ENCODE measurements at regions of chr9 and their contacts with region 1.

Region 1: DNA sequence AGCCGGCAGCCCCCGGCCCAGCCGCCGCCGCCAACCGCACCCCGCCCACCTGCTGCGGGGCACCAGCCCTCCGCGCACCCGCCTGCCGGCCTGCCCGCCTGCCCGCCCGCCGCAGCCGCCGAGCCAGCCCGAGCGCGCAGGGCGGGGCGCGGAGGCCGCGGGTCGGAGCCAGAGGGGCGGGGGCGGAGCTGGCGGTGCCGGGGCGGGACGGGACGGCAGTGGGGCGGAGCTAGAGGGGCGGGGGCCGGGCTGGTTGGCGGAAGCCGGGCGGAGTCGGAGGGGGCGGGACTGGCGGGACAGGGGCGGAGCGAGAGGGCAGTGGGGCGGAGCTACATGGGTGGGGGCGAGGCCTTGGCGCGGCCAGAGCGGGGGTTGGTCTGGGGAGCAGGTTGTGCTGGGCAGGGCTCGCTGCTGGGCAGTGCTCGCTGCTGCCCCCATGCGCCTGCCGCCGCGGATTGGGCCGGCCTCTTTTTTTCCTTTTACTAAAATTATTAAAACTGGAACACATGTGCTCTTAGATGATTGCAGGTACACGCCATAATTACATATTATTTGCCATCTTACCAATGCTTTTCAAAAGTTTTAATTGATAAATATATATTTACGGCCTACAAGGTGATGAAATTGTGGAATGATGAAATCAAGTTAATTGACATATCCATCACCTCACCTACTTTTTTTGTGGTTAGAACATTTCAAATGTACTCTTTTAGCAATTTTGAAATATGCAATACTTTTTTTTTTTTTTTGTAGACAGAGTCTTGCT is at the start of gene SH3GLB2:
- DNase-seq: peak; percentile 74 to 94
- H3K4me3 ChIP-seq: peak within 1 kb of the TSS; percentile 80 to 84
- H3K27ac ChIP-seq: peak within 1 kb of the TSS; percentile 82 to 84
- H3K4me1 ChIP-seq: peaks cover 14 to 24% of the 10 kb centered on the region in 2 donors
- H3K27me3 ChIP-seq: no peaks in the 10 kb centered on the region
- CTCF ChIP-seq: peak; percentile 84 to 95 (median 90)
- total RNA-seq, gene SH3GLB2: 138 TPM

Region 2: GRCh38 chr9:128863647-128864046 is 164.7 kb before region 1 on chr9:
- intact Hi-C with region 1: loop called (anchors 5 kb)
- DNase-seq: peak in 1 of 2 donors; percentile 84
- H3K4me3 ChIP-seq: no peak overlapping the region
- H3K27ac ChIP-seq: no peak overlapping the region
- H3K4me1 ChIP-seq: peaks cover 0 to 8% of the 10 kb centered on the region in 2 donors
- H3K27me3 ChIP-seq: no peaks in the 10 kb centered on the region
- CTCF ChIP-seq: peak; percentile 93 to 95 (median 94)

Region 3: GRCh38 chr9:128992995-128993394 is 35.4 kb before region 1 on chr9:
- intact Hi-C with region 1: loop called (anchors 5 kb)
- DNase-seq: no peak
- H3K4me3 ChIP-seq: no peak overlapping the region
- H3K27ac ChIP-seq: no peak overlapping the region
- H3K4me1 ChIP-seq: no peaks in the 10 kb centered on the region
- H3K27me3 ChIP-seq: no peaks in the 10 kb centered on the region
- CTCF ChIP-seq: peak in 1 of 3 experiments; percentile 26

Region 4: GRCh38 chr9:129006328-129007034 is 21.9 kb before region 1 on chr9:
- intact Hi-C with region 1: loop called (anchors 2 kb)
- DNase-seq: peak in 1 of 2 donors; percentile 86
- H3K4me3 ChIP-seq: no peak overlapping the region
- H3K27ac ChIP-seq: peak overlapping the region; percentile 61 to 70
- H3K4me1 ChIP-seq: peaks cover 0 to 18% of the 10 kb centered on the region in 2 donors
- H3K27me3 ChIP-seq: no peaks in the 10 kb centered on the region
- CTCF ChIP-seq: peak; percentile 76 to 88 (median 76)